ENCODE measurements at regions of chr2 and their contacts with region 1.

Region 1: DNA sequence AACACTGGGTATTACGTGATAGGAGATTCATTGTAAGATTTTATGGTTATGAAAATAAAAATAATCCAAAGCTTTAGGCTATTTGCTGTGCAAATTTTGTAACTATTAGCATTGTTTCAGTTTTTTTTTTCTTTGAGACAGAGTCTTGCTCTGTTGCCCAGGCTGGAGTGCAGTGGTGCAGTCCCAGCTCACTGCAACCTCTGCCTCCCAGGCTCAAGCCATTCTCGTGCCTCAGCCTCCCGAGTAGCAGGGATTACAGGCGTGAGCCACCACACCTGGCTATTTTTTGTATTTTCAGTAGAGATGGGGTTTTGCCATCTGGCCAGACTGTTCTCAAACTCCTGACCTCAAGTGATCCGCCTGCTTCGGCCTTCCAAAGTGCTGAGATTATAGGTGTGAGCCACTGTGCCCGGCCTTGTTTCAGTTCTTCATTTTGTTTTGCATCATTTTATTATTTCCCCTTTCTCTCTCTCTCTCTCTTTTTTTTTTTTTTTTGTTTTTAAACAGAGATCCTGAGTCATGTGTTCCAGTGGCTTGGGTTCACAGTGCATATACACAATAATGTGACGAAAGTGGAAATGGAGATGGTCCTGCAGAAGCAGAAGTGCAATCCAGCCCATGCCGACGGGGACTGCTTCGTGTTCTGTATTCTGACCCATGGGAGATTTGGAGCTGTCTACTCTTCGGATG is 25.8 kb downstream of the CASP10 start:
- DNase-seq: no peak
- ATAC-seq: no peak
- H3K4me3 Mint-ChIP-seq: no peak overlapping the region
- H3K27ac Mint-ChIP-seq: no peak overlapping the region
- H3K4me1 Mint-ChIP-seq: peaks cover 25% of the 10 kb centered on the region
- H3K27me3 Mint-ChIP-seq: no peaks in the 10 kb centered on the region

Region 2: GRCh38 chr2:201194097-201194496 is 14.6 kb before region 1 on chr2:
- CTCF ChIA-PET with region 1: interaction called, 10 read pairs
- POLR2A ChIA-PET with region 1: no interaction called
- intact Hi-C with region 1: loop called (anchors 1 to 2 kb)
- DNase-seq: no peak
- ATAC-seq: peak; percentile 91
- H3K4me3 Mint-ChIP-seq: peak overlapping the region; percentile 5
- H3K27ac Mint-ChIP-seq: no peak overlapping the region
- H3K4me1 Mint-ChIP-seq: peaks cover 65% of the 10 kb centered on the region
- H3K27me3 Mint-ChIP-seq: no peaks in the 10 kb centered on the region

Measured in activated CD4-positive, alpha-beta T cell treated with anti-CD3 and anti-CD28 coated beads for 36 hours (primary cell).